CD4-positive, alpha-beta T cell (primary cell): ENCODE measurements at regions of chr15 and their contacts with region 1.

Region 1: GRCh38 chr15:39782441-39783138 is at the start of gene FSIP1:
- DNase-seq: peak; percentile 89 to 97 (median 93)
- ATAC-seq: peak; percentile 98
- H3K4me3 ChIP-seq: peak within 1 kb of the TSS; percentile 83
- H3K4me3 Mint-ChIP-seq: peak within 1 kb of the TSS; percentile 86
- H3K27ac ChIP-seq: peak within 1 kb of the TSS; percentile 66 to 83
- H3K27ac Mint-ChIP-seq: peak within 1 kb of the TSS; percentile 76
- H3K4me1 ChIP-seq: peaks cover 9% of the 10 kb centered on the region
- H3K4me1 Mint-ChIP-seq: peaks cover 56% of the 10 kb centered on the region
- H3K27me3 ChIP-seq: no peaks in the 10 kb centered on the region
- H3K27me3 Mint-ChIP-seq: no peaks in the 10 kb centered on the region
- CTCF ChIP-seq: no peak
- total RNA-seq, gene FSIP1: 0.22 to 0.34 TPM

Region 2: GRCh38 chr15:39770748-39771689 is 11.6 kb before region 1 on chr15:
- CTCF ChIA-PET with region 1: no interaction called
- POLR2A ChIA-PET with region 1: interaction called, 7 read pairs
- intact Hi-C with region 1: loop called (anchors 1 kb)
- DNase-seq: no peak
- ATAC-seq: no peak
- H3K4me3 ChIP-seq: no peak overlapping the region
- H3K4me3 Mint-ChIP-seq: no peak overlapping the region
- H3K27ac ChIP-seq: no peak overlapping the region
- H3K27ac Mint-ChIP-seq: no peak overlapping the region
- H3K4me1 ChIP-seq: peaks cover 9% of the 10 kb centered on the region
- H3K4me1 Mint-ChIP-seq: peaks cover 22% of the 10 kb centered on the region
- H3K27me3 ChIP-seq: no peaks in the 10 kb centered on the region
- H3K27me3 Mint-ChIP-seq: no peaks in the 10 kb centered on the region
- CTCF ChIP-seq: no peak

Region 3: DNA sequence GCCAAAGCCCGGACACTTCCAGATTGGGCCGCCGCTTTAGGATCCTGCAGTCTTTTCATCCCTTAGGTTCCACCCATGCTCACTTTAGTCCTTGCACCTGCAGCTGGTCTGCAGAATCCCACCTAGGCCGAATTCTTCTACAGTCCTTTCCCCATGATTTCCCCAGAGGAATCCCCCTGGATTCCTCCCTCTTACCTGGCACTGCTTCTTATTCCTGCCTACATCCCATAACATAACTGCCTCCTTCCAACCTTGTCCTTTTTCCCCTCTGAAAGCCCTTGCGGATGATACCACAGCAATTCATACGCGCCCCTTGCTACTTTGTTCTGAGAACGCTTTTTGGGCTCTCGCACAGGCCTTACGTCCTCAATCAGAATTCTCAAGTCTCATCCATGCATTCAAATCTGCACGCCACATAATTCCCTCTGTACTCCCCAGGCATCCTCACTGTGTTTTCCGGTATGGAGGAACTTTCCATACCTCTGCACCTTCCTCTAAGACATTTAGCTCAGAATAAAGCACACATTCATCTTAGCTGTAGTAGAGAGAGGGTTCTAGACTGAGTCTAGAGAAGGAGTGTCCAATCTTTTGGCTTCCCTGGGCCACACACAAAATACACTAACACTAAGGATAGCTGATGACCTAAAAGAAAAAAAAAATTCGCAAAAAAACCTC is 151.9 kb after region 1 on chr15:
- CTCF ChIA-PET with region 1: no interaction called
- POLR2A ChIA-PET with region 1: no interaction called
- intact Hi-C with region 1: loop called (anchors 2 to 5 kb)
- DNase-seq: peak in 4 of 14 experiments; percentile 2 to 25 (median 10)
- ATAC-seq: peak; percentile 4
- H3K4me3 ChIP-seq: peak overlapping the region; percentile 66
- H3K4me3 Mint-ChIP-seq: peak overlapping the region; percentile 88
- H3K27ac ChIP-seq: no peak overlapping the region
- H3K27ac Mint-ChIP-seq: peak overlapping the region; percentile 28
- H3K4me1 ChIP-seq: peaks cover 24% of the 10 kb centered on the region
- H3K4me1 Mint-ChIP-seq: peaks cover 31% of the 10 kb centered on the region
- H3K27me3 ChIP-seq: no peaks in the 10 kb centered on the region
- H3K27me3 Mint-ChIP-seq: no peaks in the 10 kb centered on the region
- CTCF ChIP-seq: no peak

Region 4: GRCh38 chr15:40044717-40045571 is 262.4 kb after region 1 on chr15:
- CTCF ChIA-PET with region 1: no interaction called
- POLR2A ChIA-PET with region 1: no interaction called
- intact Hi-C with region 1: loop called in 1 of 2 experiments (anchors 10 kb)
- DNase-seq: peak; percentile 66 to 91 (median 78)
- ATAC-seq: peak; percentile 82
- H3K4me3 ChIP-seq: no peak overlapping the region
- H3K4me3 Mint-ChIP-seq: peak overlapping the region; percentile 39
- H3K27ac ChIP-seq: no peak overlapping the region
- H3K27ac Mint-ChIP-seq: peak overlapping the region; percentile 70
- H3K4me1 ChIP-seq: peaks cover 56% of the 10 kb centered on the region
- H3K4me1 Mint-ChIP-seq: peaks cover 68% of the 10 kb centered on the region
- H3K27me3 ChIP-seq: no peaks in the 10 kb centered on the region
- H3K27me3 Mint-ChIP-seq: no peaks in the 10 kb centered on the region
- CTCF ChIP-seq: peak; percentile 95

Region 5: GRCh38 chr15:40217159-40217824 is 434.7 kb after region 1 on chr15:
- CTCF ChIA-PET with region 1: no interaction called
- POLR2A ChIA-PET with region 1: no interaction called
- intact Hi-C with region 1: loop called in 1 of 2 experiments (anchors 5 kb)
- DNase-seq: peak in 11 of 14 experiments; percentile 9 to 85 (median 31)
- ATAC-seq: peak; percentile 99
- H3K4me3 ChIP-seq: no peak overlapping the region
- H3K4me3 Mint-ChIP-seq: no peak overlapping the region
- H3K27ac ChIP-seq: no peak overlapping the region
- H3K27ac Mint-ChIP-seq: no peak overlapping the region
- H3K4me1 ChIP-seq: no peaks in the 10 kb centered on the region
- H3K4me1 Mint-ChIP-seq: no peaks in the 10 kb centered on the region
- H3K27me3 ChIP-seq: no peaks in the 10 kb centered on the region
- H3K27me3 Mint-ChIP-seq: no peaks in the 10 kb centered on the region
- CTCF ChIP-seq: peak; percentile 90

Region 6: DNA sequence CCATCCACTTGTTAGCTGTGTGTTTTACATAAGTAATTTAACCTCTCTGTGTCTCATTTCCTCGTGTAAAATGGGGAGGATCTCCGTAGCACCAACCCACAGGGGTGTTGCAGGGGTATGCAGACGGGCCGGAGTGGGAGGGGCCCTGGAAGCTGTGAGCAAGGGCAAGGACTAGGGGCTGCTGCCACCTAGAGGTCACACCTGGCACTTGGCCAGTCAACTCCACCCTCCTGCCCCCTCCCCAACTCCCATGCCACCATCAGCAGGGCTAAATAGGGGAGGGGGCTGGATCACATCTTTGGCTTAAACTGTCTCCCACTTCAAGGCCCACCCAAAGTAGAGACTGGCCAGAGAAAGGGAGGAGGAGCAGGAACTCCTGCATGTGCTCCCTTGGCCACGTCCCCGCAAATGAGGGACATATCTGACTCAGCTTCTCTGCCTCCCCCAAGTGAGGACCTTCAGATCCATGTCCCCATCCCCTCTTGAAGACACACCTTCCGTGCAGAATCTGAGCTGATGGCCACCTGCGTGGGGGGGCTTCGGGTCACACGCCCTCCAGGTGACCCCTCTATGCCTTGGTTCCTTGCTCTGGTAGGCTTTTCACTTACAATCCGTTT is 555.6 kb after region 1 on chr15:
- CTCF ChIA-PET with region 1: interaction called, 4 read pairs
- POLR2A ChIA-PET with region 1: no interaction called
- intact Hi-C with region 1: loop called in 1 of 2 experiments (anchors 10 kb)
- DNase-seq: peak; percentile 64 to 89 (median 73)
- ATAC-seq: peak; percentile 81
- H3K4me3 ChIP-seq: no peak overlapping the region
- H3K4me3 Mint-ChIP-seq: no peak overlapping the region
- H3K27ac ChIP-seq: no peak overlapping the region
- H3K27ac Mint-ChIP-seq: no peak overlapping the region
- H3K4me1 ChIP-seq: peaks cover 31% of the 10 kb centered on the region
- H3K4me1 Mint-ChIP-seq: peaks cover 21% of the 10 kb centered on the region
- H3K27me3 ChIP-seq: no peaks in the 10 kb centered on the region
- H3K27me3 Mint-ChIP-seq: no peaks in the 10 kb centered on the region
- CTCF ChIP-seq: peak; percentile 90

Region 7: GRCh38 chr15:40564591-40565332 is 782.2 kb after region 1 on chr15 and contains the start of gene CCDC32:
- CTCF ChIA-PET with region 1: no interaction called
- POLR2A ChIA-PET with region 1: no interaction called
- intact Hi-C with region 1: loop called in 1 of 2 experiments (anchors 10 kb)
- DNase-seq: peak; percentile 84 to 99 (median 92)
- ATAC-seq: peak; percentile 93
- H3K4me3 ChIP-seq: peak within 1 kb of the TSS; percentile 76
- H3K4me3 Mint-ChIP-seq: peak within 1 kb of the TSS; percentile 97
- H3K27ac ChIP-seq: peak within 1 kb of the TSS; percentile 85 to 89
- H3K27ac Mint-ChIP-seq: peak within 1 kb of the TSS; percentile 88
- H3K4me1 ChIP-seq: peaks cover 34% of the 10 kb centered on the region
- H3K4me1 Mint-ChIP-seq: peaks cover 43% of the 10 kb centered on the region
- H3K27me3 ChIP-seq: no peaks in the 10 kb centered on the region
- H3K27me3 Mint-ChIP-seq: no peaks in the 10 kb centered on the region
- CTCF ChIP-seq: no peak
- total RNA-seq, gene CCDC32: 20.9 to 21.3 TPM